ENCODE measurements at regions of chr18 and their contacts with region 1.

Region 1: GRCh38 chr18:63936156-63936931 is 12.8 kb upstream of the HMSD start:
- DNase-seq: peak; percentile 88
- CTCF ChIP-seq: peak; percentile 74

Region 2: DNA sequence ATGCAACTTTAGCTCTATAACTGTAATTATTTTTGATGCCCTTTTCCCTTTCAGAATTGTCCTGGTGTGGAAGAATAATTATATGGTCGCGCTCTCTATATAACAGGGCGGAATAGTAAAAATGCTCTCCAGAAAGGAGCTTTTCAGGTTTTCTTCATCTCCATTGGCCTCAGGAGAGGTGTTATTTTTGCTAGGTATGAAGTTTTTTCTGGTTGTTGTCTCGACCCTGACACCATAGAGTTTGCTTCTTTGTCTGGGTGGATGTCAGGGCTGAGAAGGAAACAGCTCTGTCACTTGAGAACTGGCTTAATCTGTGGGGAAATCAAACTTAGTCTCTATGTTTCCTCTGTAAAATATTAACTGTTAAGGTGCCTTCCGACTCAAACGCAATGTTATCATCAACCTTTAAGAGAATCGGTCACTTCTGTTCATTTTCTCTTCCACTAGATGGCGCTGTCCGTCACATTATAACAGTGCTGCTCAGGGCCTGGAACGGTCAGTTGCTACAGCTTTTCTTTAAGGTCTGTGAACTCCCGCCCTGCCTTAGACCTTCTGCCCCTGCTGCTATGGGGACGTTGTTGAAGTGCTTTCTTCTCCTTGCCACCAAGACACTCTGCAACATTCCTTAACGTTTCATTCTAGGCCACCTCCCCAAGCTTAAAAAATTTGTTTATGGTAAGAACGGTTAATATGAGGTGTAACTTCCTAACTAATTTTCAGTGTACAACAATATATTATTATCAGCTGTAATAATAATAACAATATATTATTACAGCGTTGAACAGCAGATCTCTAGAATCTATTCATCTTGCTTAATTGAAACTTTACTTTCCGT is 417.9 kb before region 1 on chr18:
- CTCF ChIA-PET with region 1: interaction called, 27 read pairs
- POLR2A ChIA-PET with region 1: no interaction called
- DNase-seq: peak; percentile 45
- CTCF ChIP-seq: peak; percentile 68

Region 3: GRCh38 chr18:63823518-63824219 is 112.7 kb before region 1 on chr18:
- CTCF ChIA-PET with region 1: interaction called, 32 read pairs
- POLR2A ChIA-PET with region 1: no interaction called
- DNase-seq: peak; percentile 14
- CTCF ChIP-seq: peak; percentile 25

Region 4: GRCh38 chr18:63844254-63844653 is 92.1 kb before region 1 on chr18:
- CTCF ChIA-PET with region 1: interaction called, 13 read pairs
- POLR2A ChIA-PET with region 1: no interaction called
- DNase-seq: no peak
- CTCF ChIP-seq: peak; percentile 27

Region 5: DNA sequence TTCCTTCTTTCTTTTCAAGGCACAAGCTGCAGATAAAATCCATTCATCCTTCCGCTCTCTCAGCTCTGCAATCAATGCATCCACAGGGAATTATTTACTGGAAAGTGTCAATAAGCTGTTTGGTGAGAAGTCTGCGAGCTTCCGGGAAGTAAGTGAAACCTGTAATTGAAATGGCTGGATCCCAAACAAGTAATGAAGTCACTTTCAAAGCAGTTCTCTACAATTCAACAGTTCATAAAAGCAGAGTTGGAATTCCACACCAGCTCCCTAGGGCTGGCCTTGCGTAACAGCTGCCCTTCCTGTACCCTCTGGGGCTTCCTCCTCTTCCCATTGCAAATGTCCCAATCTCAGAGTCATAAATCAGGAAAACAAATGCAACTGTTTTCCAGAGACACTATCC is 39.3 kb before region 1 on chr18:
- CTCF ChIA-PET with region 1: interaction called, 38 read pairs
- POLR2A ChIA-PET with region 1: no interaction called
- DNase-seq: no peak
- CTCF ChIP-seq: no peak

Region 6: DNA sequence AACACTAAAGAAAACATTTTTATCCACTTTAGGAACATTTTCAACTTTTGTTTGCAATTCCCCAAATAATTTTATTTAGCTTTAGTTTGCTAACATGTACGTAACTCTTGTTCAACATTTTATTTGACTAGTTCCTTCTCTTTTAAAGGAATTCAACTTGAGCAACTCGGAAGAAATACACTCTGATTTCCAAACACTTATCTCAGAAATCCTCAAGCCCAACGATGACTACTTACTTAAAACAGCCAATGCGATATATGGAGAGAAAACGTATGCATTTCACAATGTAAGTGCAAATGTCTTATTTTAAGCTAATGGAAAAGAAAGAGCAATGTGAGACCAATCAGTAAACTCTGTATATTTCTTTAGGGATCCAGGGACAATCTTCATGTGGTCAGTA is 18.5 kb before region 1 on chr18:
- CTCF ChIA-PET with region 1: interaction called, 56 read pairs
- POLR2A ChIA-PET with region 1: no interaction called
- DNase-seq: no peak
- CTCF ChIP-seq: no peak

Region 7: DNA sequence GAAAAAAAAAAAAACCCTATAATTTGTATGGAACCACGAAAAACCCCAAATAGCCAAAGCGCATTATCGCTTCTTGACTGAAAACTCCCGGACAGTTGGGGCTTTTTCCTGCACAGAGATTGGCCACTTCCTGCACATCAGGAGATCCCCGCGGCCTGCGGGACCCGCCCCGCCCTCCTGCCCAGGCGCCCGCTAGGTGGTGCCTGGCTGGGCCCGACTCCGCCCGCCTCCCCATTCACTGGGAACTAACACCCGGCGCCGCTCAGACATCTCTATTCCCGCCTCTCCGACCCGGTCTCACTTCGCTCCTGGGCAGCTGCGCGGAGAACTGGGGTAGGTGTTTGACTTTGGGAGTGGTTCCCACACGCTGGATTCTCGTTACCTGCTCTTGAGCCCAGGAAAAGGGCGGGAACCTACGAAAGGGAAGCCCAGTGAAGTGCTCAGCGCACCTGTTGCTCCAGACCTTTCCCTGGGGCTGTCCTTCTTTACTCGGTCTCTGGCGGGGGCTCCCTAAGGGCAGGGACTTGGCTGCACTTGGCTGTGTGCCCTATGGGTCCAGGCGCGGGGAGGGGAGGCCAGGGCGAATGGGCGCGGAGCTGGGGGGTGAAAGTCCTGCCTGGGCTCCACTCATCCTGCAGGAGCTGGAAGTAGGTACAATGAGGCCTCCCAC is 12.9 kb after region 1 on chr18 and contains the start of gene HMSD:
- CTCF ChIA-PET with region 1: interaction called, 34 read pairs
- POLR2A ChIA-PET with region 1: no interaction called
- DNase-seq: peak; percentile 83
- CTCF ChIP-seq: peak; percentile 40

Region 8: DNA sequence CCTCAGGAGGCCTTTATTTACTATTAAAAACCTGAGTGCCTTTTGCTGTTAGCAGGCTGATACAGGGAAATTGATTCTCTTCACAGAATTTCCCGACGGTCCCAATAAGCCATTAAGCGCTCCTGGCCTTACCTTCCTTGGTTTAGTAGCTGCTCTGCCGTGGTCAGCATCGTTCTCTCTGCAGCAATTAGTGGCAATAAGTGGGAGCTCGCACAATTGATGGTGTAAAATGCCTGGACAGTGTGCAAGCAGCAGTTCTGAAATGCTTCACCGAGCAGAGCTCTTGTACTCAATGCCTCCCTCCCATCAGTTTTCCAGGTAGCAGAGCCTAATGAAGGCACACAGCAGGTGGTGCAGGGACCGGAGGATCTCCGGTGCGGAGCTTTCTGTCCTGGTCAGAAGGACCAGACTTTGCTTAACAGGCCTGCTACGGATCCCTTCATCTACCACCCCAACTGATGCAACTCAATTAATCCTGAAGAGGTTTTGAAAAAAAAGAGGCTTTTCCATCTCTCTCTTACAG is 213.6 kb after region 1 on chr18:
- CTCF ChIA-PET with region 1: no interaction called
- POLR2A ChIA-PET with region 1: no interaction called
- DNase-seq: no peak
- CTCF ChIP-seq: no peak